Testis (tissue), 5 donors: ENCODE measurements at regions of chr11 and their contacts with region 1.

Region 1: DNA sequence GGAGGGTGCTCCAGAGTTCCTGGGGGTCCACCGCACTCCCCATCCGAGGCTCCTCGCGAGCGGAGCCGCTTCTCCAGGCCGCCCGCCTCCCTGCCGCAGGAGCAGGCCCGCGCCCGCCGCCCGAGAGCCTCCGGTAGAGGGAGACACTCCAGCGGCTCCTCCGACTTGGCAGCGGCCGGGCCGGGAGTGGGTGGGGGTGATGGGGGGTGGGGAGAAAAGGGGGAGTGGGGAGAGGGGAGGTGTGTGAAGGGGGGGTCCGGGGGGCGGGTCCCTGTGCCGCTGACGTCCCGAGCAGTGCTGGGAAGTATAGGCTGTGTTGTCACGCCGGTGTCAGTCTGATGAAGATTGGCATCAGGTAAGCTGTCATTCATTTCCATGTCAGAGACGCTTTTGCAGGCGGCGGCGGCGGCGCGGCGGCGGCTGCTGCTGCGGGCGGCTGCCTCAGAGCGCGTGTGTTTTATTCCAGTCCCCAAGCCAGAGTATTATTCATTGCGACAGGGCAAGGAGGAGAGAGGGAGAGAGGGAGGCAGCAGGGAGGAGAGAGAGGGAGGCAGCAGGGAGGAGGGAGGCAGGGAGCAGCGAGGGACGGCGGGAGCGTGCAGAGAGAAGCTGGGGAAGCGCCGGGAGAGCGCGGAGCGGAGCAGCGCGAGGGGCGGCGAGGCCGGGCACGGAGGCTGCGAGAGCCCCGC is at the start of gene PKNOX2:
- DNase-seq: peak; percentile 82
- H3K4me3 ChIP-seq: peak within 1 kb of the TSS; percentile 61 to 71
- H3K27ac ChIP-seq: peak within 1 kb of the TSS; percentile 87 to 93
- H3K4me1 ChIP-seq: peaks cover 22% of the 10 kb centered on the region
- H3K27me3 ChIP-seq: no peaks in the 10 kb centered on the region
- CTCF ChIP-seq: peak in 2 of 3 experiments; percentile 44 to 69
- POLR2A ChIP-seq: no peak
- total RNA-seq, gene PKNOX2: 5.5 to 7.3 TPM

Region 2: GRCh38 chr11:125224391-125225010 is 59.9 kb after region 1 on chr11:
- intact Hi-C with region 1: loop called (anchors 5 kb)
- DNase-seq: peak; percentile 68
- H3K4me3 ChIP-seq: no peak overlapping the region
- H3K27ac ChIP-seq: peak overlapping the region in 1 of 2 donors; percentile 18
- H3K4me1 ChIP-seq: peaks cover 21% of the 10 kb centered on the region
- H3K27me3 ChIP-seq: no peaks in the 10 kb centered on the region
- CTCF ChIP-seq: peak in 2 of 3 experiments; percentile 11 to 32
- POLR2A ChIP-seq: no peak

Region 3: GRCh38 chr11:125343718-125344131 is 179.2 kb after region 1 on chr11:
- intact Hi-C with region 1: loop called (anchors 5 kb)
- DNase-seq: no peak
- H3K4me3 ChIP-seq: no peak overlapping the region
- H3K27ac ChIP-seq: peak overlapping the region in 1 of 2 donors; percentile 40
- H3K4me1 ChIP-seq: peaks cover 56% of the 10 kb centered on the region
- H3K27me3 ChIP-seq: no peaks in the 10 kb centered on the region
- CTCF ChIP-seq: no peak
- POLR2A ChIP-seq: no peak